ENCODE measurements at regions of chr11 and their contacts with region 1.

Region 1: DNA sequence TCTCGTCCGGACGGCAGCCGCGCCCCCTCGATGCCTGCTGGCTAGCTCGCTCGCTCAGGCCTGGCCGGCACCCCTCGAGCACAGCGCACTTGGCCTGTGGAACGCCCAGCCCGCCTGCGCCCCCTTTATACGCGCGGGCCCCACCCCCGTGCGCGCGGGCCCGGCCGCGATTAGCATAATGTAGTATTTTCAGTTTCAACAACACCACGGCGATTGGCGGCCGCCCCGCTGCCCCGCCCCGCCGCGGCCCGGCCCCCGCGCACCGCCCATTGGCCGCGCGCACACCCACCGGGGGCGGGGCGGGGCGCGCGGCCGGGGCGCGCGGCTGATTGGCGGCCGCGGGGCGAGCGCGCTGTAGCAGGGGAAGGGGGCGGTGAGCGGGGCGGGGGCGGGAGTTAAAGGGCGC is at the start of gene CDKN1C:
- DNase-seq: peak; percentile 41 to 94 (median 89)
- H3K4me3 ChIP-seq: peak within 1 kb of the TSS; percentile 53 to 81 (median 71)
- H3K27ac ChIP-seq: peak within 1 kb of the TSS; percentile 40 to 94 (median 88)
- H3K27me3 ChIP-seq: peaks cover 0 to 10% (median 0%) of the 10 kb centered on the region in 45 donors
- CTCF ChIP-seq: peak in 1 of 56 donors; percentile 13
- total RNA-seq, gene CDKN1C: 11.0 to 191 (median 44.8) TPM

Region 2: GRCh38 chr11:2305140-2305840 is 580.4 kb before region 1 on chr11:
- intact Hi-C with region 1: loop called in 1 of 2 experiments (anchors 5 kb)
- DNase-seq: peak; percentile 72 to 85 (median 82)
- H3K4me3 ChIP-seq: no peak overlapping the region
- H3K27ac ChIP-seq: peak overlapping the region in 10 of 59 donors; percentile 6 to 82 (median 48)
- H3K27me3 ChIP-seq: no peaks in the 10 kb centered on the region
- CTCF ChIP-seq: peak; percentile 46 to 96 (median 90)

Region 3: DNA sequence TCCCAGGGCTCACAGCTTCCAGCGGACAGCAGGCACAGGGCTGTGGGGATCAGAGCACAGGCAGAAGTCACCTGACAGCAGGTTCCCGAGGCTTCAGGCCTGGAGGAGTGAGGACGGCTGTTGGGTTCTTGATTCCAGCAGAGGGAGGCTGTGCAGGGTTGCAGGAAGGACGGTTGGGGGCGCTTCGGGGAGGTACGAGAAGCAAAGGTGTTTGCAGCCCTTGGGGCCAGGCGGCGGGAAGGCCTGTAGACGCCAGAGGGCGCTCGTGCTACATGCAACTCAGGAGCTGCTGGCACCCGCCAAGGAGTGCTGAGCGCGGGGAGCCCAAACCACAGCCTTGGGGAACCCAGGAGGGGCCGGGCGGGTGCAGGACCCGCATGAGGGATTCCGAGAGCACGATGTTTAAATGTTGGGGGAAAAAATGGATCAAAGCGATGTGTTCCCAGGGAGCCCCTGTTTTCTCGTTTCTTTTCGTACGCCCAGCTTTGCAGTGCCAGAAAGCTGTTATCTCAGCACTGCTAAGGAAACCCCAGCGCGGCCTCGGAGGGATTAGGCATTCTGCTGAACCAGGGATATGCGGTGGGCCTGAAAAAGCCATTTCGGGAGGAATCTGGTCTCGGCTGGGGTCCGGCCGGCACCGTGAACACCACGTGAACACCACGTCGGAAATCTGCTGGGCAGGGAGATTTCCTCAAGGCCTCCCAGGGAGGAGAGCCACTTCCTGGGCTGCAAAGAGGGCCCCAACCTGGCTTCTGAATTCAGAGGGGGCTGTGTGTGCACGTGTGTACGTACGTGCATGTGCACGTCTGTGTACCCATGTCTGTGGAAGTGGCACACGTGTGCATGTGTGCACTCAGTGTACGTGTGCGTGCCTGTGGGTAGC is 352.7 kb before region 1 on chr11:
- intact Hi-C with region 1: loop called (anchors 1 kb)
- DNase-seq: peak; percentile 86 to 93 (median 91)
- H3K4me3 ChIP-seq: peak overlapping the region in 54 of 59 donors; percentile 12 to 58 (median 39)
- H3K27ac ChIP-seq: peak overlapping the region in 7 of 59 donors; percentile 5 to 51 (median 33)
- H3K27me3 ChIP-seq: peaks cover 0 to 3% (median 0%) of the 10 kb centered on the region in 45 donors
- CTCF ChIP-seq: peak; percentile 96 to 100 (median 99)

Region 4: GRCh38 chr11:2590965-2591754 is 294.5 kb before region 1 on chr11:
- intact Hi-C with region 1: loop called in 1 of 2 experiments (anchors 5 kb)
- DNase-seq: peak; percentile 12 to 90 (median 82)
- H3K4me3 ChIP-seq: peak overlapping the region in 45 of 59 donors; percentile 1 to 56 (median 29)
- H3K27ac ChIP-seq: peak overlapping the region in 52 of 59 donors; percentile 6 to 89 (median 68)
- H3K27me3 ChIP-seq: peaks cover 0 to 3% (median 0%) of the 10 kb centered on the region in 45 donors
- CTCF ChIP-seq: peak in 1 of 56 donors; percentile 19

Region 5: GRCh38 chr11:2699531-2700414 is 185.9 kb before region 1 on chr11 and contains the start of gene KCNQ1OT1:
- intact Hi-C with region 1: loop called (anchors 2 to 10 kb)
- DNase-seq: peak; percentile 80 to 94 (median 92)
- H3K4me3 ChIP-seq: peak within 1 kb of the TSS; percentile 34 to 80 (median 69)
- H3K27ac ChIP-seq: peak within 1 kb of the TSS in 58 of 59 donors; percentile 43 to 96 (median 92)
- H3K27me3 ChIP-seq: no peaks in the 10 kb centered on the region
- CTCF ChIP-seq: peak in 11 of 56 donors; percentile 6 to 31 (median 22)
- total RNA-seq, gene KCNQ1OT1: 2.4 to 9.8 (median 4.7) TPM

Region 6: GRCh38 chr11:2778630-2779498 is 106.8 kb before region 1 on chr11:
- intact Hi-C with region 1: no loop called
- DNase-seq: peak; percentile 72 to 92 (median 81)
- H3K4me3 ChIP-seq: peak overlapping the region in 44 of 59 donors; percentile 1 to 56 (median 28)
- H3K27ac ChIP-seq: peak overlapping the region; percentile 51 to 95 (median 87)
- H3K27me3 ChIP-seq: no peaks in the 10 kb centered on the region
- CTCF ChIP-seq: peak in 7 of 56 donors; percentile 11 to 44 (median 26)

Region 7: GRCh38 chr11:2807025-2807681 is 78.5 kb before region 1 on chr11:
- intact Hi-C with region 1: loop called in 1 of 2 experiments (anchors 5 kb)
- DNase-seq: peak in 9 of 10 donors; percentile 41 to 85 (median 58)
- H3K4me3 ChIP-seq: peak overlapping the region in 25 of 59 donors; percentile 2 to 45 (median 19)
- H3K27ac ChIP-seq: peak overlapping the region in 18 of 59 donors; percentile 2 to 64 (median 37)
- H3K27me3 ChIP-seq: peaks cover 0 to 16% (median 0%) of the 10 kb centered on the region in 45 donors
- CTCF ChIP-seq: peak in 2 of 56 donors; percentile 8 to 13

Region 8: GRCh38 chr11:3057069-3057963 is 171.6 kb after region 1 on chr11 and contains the start of gene CARS1:
- intact Hi-C with region 1: no loop called
- DNase-seq: peak; percentile 94 to 98 (median 96)
- H3K4me3 ChIP-seq: peak within 1 kb of the TSS; percentile 57 to 97 (median 87)
- H3K27ac ChIP-seq: peak within 1 kb of the TSS in 57 of 59 donors; percentile 23 to 91 (median 83)
- H3K27me3 ChIP-seq: no peaks in the 10 kb centered on the region
- CTCF ChIP-seq: peak in 44 of 56 donors; percentile 5 to 62 (median 34)
- total RNA-seq, gene CARS1: 40.9 to 104 (median 59.2) TPM